ENCODE measurements at regions of chr10 and their contacts with region 1.

Region 1: DNA sequence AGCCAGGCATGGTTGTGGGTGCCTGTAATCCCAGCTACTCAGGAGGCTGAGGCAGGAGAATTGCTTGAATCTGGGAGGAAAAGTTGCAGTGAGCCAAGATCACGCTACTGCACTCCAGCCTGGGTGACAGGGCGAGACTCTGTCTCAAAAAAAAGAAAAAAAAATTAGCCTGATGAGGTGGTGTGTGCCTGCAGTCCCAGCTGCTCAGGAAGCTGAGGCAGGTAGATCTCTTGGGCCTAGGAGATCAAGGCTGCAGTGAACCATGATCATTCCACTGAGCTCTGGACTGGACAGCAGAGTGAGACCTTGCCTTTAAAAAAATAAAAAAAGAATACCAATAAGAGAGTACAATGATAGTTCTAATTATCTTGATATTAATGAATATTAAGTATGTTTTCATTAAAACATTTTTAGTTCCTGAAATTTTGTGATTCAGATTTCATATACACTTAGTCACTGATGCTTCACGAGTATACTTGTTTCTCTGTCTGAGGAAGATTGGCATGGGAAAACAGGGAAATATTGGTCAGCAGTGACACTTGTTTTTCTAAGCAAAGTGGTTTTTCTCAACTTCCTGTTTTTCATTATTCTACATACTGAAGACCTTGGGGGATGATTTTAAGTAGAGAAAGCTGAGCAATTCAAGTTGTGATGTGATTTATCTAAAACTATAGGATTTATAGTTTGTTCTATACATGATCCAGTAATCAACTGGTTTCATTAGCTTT is 76.8 kb downstream of the ADK start:
- DNase-seq: peak; percentile 96
- ATAC-seq: peak; percentile 41
- H3K4me3 ChIP-seq: no peak overlapping the region
- H3K27ac ChIP-seq: peak overlapping the region; percentile 55
- H3K4me1 ChIP-seq: peaks cover 59% of the 10 kb centered on the region
- H3K27me3 ChIP-seq: no peaks in the 10 kb centered on the region
- CTCF ChIP-seq: no peak

Region 2: GRCh38 chr10:74051736-74052342 is 176.0 kb before region 1 on chr10:
- CTCF ChIA-PET with region 1: no interaction called
- POLR2A ChIA-PET with region 1: interaction called, 14 read pairs
- intact Hi-C with region 1: no loop called
- DNase-seq: no peak
- ATAC-seq: no peak
- H3K4me3 ChIP-seq: no peak overlapping the region
- H3K27ac ChIP-seq: no peak overlapping the region
- H3K4me1 ChIP-seq: peaks cover 53% of the 10 kb centered on the region
- H3K27me3 ChIP-seq: no peaks in the 10 kb centered on the region
- CTCF ChIP-seq: no peak

Region 3: GRCh38 chr10:74244097-74244685 is 16.3 kb after region 1 on chr10:
- CTCF ChIA-PET with region 1: no interaction called
- POLR2A ChIA-PET with region 1: no interaction called
- intact Hi-C with region 1: no loop called
- DNase-seq: peak; percentile 99
- ATAC-seq: peak; percentile 20; the same call in 1 of the 2 replicates
- H3K4me3 ChIP-seq: no peak overlapping the region
- H3K27ac ChIP-seq: no peak overlapping the region
- H3K4me1 ChIP-seq: no peaks in the 10 kb centered on the region
- H3K27me3 ChIP-seq: no peaks in the 10 kb centered on the region
- CTCF ChIP-seq: peak; percentile 100

Region 4: DNA sequence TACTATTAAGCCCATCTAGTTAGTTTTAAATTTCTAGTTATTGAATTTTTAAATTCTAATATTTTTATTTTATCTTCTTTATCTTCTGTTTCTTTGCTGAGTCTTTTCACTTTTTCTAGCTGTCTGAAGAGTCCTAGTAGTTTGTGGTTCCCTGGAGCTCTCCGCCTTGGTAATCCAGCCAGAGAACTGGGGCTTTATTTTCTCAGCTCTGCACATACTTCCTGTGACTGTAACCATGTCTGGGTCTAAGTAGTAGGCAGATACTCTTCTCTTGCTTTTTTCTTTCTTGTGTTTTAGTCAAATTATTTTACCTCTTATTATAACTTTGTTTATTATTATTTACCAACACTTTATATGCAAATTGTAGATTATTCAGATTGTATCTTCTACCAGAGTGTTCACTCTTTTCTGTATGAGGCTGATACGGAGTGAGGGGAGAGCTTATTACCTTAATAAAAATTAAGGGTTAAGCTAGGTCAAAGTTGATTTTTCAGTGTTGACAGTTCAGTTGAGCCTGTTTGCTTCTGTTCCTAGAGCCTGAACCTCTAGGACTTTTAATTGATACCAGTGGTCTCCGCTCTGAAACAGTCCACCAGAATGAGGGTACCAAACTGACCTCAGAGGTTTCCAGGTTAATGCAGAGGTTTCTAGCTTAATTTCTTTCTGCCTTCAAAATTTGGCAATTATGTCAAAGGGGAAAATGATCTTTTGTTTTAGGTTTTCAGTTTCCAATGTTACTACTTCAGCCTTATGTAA is 78.5 kb after region 1 on chr10:
- CTCF ChIA-PET with region 1: no interaction called
- POLR2A ChIA-PET with region 1: no interaction called
- intact Hi-C with region 1: no loop called
- DNase-seq: no peak
- ATAC-seq: no peak; the same call in 1 of the 2 replicates
- H3K4me3 ChIP-seq: no peak overlapping the region
- H3K27ac ChIP-seq: no peak overlapping the region
- H3K4me1 ChIP-seq: peaks cover 9% of the 10 kb centered on the region
- H3K27me3 ChIP-seq: no peaks in the 10 kb centered on the region
- CTCF ChIP-seq: no peak

Region 5: GRCh38 chr10:74612195-74612594 is 384.3 kb after region 1 on chr10:
- CTCF ChIA-PET with region 1: no interaction called
- POLR2A ChIA-PET with region 1: no interaction called
- intact Hi-C with region 1: no loop called
- DNase-seq: peak; percentile 69
- ATAC-seq: peak; percentile 88
- H3K4me3 ChIP-seq: no peak overlapping the region
- H3K27ac ChIP-seq: no peak overlapping the region
- H3K4me1 ChIP-seq: no peaks in the 10 kb centered on the region
- H3K27me3 ChIP-seq: no peaks in the 10 kb centered on the region
- CTCF ChIP-seq: no peak

Measured in PC-3 (cell line).